CD4-positive, alpha-beta memory T cell (primary cell): ENCODE measurements at regions of chrX and their contacts with region 1.

Region 1: GRCh38 chrX:17736856-17737706 is at the start of gene SCML1:
- DNase-seq: peak; percentile 78 to 90 (median 82)
- H3K4me3 ChIP-seq: peak within 1 kb of the TSS in 1 of 2 donors; percentile 50
- H3K4me3 Mint-ChIP-seq: peak within 1 kb of the TSS; percentile 86 to 97 (median 90)
- H3K27ac ChIP-seq: peak within 1 kb of the TSS; percentile 73
- H3K27ac Mint-ChIP-seq: peak within 1 kb of the TSS; percentile 86 to 98 (median 90)
- H3K4me1 ChIP-seq: peaks cover 15% of the 10 kb centered on the region
- H3K4me1 Mint-ChIP-seq: peaks cover 11 to 33% (median 22%) of the 10 kb centered on the region in 4 donors
- H3K27me3 ChIP-seq: no peaks in the 10 kb centered on the region
- H3K27me3 Mint-ChIP-seq: peaks cover 0 to 3% of the 10 kb centered on the region in 2 donors
- total RNA-seq, gene SCML1: 14.4 to 18.0 TPM

Region 2: DNA sequence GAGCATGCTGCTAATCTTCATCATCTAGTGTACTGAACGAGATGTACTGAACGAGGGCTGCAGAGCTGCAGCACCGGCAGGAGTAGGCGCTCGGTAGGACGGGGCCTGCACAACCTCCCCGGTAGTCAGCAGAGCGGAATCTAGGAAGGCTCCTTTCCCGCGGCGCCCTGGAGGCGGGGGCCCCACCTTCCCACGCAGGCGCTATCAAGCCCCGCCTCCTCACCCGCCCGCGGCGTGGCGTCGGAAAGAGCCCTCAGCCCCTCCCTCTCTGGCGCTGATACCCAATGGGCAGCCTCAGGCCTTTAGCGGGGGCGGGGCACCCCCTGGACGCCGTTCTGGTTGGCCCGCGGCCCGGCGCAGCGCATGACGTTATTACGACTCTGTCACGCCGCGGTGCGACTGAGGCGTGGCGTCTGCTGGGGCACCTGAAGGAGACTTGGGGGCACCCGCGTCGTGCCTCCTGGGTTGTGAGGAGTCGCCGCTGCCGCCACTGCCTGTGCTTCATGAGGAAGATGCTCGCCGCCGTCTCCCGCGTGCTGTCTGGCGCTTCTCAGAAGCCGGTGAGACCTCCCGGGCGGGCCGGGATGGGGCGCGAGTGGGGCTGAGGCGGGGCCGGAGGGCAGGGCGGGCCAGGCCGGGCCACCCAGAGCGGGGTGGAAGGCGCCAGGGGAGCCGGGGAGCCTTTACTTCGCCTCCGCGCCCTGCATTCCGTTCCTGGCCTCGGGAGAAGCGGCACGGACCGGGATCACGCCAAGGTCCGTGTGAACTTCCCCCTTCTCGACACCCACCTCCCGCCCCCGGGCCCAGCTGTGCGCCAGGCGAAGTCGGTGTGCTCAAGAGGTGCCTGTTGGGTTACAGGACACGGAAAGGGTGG is 1606.7 kb after region 1 on chrX and contains the start of gene PDHA1:
- CTCF ChIA-PET with region 1: no interaction called
- POLR2A ChIA-PET with region 1: no interaction called
- intact Hi-C with region 1: loop called (anchors 1 kb)
- DNase-seq: peak; percentile 88 to 93 (median 92)
- H3K4me3 ChIP-seq: peak within 1 kb of the TSS; percentile 44 to 63
- H3K4me3 Mint-ChIP-seq: peak within 1 kb of the TSS; percentile 86 to 92 (median 88)
- H3K27ac ChIP-seq: peak within 1 kb of the TSS; percentile 83
- H3K27ac Mint-ChIP-seq: peak within 1 kb of the TSS; percentile 84 to 94 (median 92)
- H3K4me1 ChIP-seq: peaks cover 19% of the 10 kb centered on the region
- H3K4me1 Mint-ChIP-seq: peaks cover 8 to 21% (median 12%) of the 10 kb centered on the region in 4 donors
- H3K27me3 ChIP-seq: no peaks in the 10 kb centered on the region
- H3K27me3 Mint-ChIP-seq: no peaks in the 10 kb centered on the region
- total RNA-seq, gene PDHA1: 116 to 124 TPM